ENCODE measurements at regions of chr5 and their contacts with region 1.

Region 1: GRCh38 chr5:173925448-173926071 is 37.4 kb downstream of the CPEB4 start:
- DNase-seq: peak; percentile 61
- H3K4me3 ChIP-seq: no peak overlapping the region
- H3K27ac ChIP-seq: no peak overlapping the region
- H3K27me3 ChIP-seq: no peaks in the 10 kb centered on the region
- CTCF ChIP-seq: peak; percentile 86

Region 2: GRCh38 chr5:173643963-173644362 is 281.6 kb before region 1 on chr5:
- in situ Hi-C with region 1: loop called (anchors 25 kb)
- DNase-seq: no peak
- H3K4me3 ChIP-seq: no peak overlapping the region
- H3K27ac ChIP-seq: no peak overlapping the region
- H3K27me3 ChIP-seq: peaks cover 2% of the 10 kb centered on the region
- CTCF ChIP-seq: no peak